Endothelial cell of umbilical vein (primary cell): ENCODE measurements at regions of chr3 and their contacts with region 1.

Region 1: DNA sequence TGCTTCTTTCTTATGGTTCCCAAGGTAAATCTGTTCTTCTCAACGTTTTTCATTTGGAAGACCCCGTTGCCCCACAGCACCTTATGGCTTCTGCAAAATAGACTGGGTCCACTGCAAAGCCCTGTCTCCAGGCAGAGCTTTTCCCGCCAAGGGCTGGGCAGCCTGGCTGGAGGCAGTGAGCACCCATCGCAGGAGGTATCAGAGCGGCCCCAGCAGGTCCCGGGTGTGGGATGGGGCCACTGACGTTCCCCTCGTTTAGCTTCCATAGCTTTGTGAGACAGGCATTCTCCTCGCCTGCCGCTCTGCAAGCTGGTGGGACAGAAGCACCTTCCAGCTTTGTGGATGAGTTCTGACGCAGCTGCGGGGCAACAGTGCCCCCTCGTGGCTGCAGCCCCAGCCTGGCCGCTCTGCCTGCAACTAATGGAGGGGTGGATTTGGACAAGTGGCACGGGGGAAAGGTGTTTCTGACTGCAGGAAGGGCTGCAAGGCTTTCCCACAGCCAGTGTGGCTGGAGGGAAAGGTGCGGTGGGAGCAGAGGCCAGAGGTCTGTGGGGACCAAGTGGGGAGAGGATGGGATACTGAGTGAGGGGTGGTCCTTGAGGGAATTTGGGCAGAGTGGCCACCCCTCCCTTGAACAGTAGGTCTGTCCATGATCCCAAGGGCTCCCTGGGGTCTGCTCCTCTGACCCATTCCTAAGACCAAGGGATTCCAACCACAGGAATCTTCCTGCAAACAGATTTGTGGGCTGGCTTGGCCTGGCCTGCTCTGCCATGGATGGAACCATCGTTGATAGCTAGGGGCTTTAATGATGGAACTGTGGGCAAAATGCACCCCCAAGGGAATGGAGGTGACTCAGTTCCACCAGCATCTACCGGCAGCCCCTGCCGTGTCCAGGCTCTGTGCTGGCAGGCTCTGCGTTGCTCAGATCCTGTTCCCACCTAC is 99.4 kb downstream of the FBLN2 start:
- DNase-seq: peak; percentile 71
- H3K4me3 ChIP-seq: no peak overlapping the region
- H3K27ac ChIP-seq: no peak overlapping the region
- H3K4me1 ChIP-seq: no peaks in the 10 kb centered on the region
- H3K27me3 ChIP-seq: peaks cover 3 to 4% of the 10 kb centered on the region in 2 experiments
- CTCF ChIP-seq: peak; percentile 95 to 99
- POLR2A ChIP-seq: no peak

Region 2: GRCh38 chr3:13091898-13092611 is 556.3 kb before region 1 on chr3:
- CTCF ChIA-PET with region 1: interaction called, 78 read pairs
- POLR2A ChIA-PET with region 1: no interaction called
- dilution Hi-C with region 1: no loop called
- intact Hi-C with region 1: loop called (anchors 1 kb)
- DNase-seq: peak; percentile 72
- H3K4me3 ChIP-seq: no peak overlapping the region
- H3K27ac ChIP-seq: no peak overlapping the region
- H3K4me1 ChIP-seq: no peaks in the 10 kb centered on the region
- H3K27me3 ChIP-seq: peaks cover 3 to 6% of the 10 kb centered on the region in 2 experiments
- CTCF ChIP-seq: peak; percentile 66 to 95
- POLR2A ChIP-seq: no peak

Region 3: DNA sequence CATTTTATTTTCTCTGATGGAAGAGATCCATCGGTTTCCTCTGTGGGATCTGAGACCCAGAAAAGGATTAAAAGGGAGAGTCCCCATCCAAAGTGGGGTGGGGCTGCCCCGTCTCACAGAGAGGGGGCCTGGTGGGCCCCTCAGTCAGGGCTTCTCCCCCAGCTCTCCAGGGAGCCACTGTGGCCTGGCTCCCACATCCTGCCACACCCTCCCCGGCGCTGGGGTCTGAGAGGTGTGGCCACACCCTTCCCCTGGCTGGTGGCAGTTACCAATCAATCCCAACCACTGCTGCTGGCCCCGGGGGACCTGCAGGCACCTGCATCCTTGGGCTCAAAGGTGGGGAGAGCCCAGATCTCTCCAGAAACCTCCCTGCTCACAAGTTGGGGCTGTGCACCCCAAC is 413.3 kb before region 1 on chr3:
- CTCF ChIA-PET with region 1: no interaction called
- POLR2A ChIA-PET with region 1: no interaction called
- dilution Hi-C with region 1: no loop called
- intact Hi-C with region 1: no loop called
- DNase-seq: no peak
- H3K4me3 ChIP-seq: no peak overlapping the region
- H3K27ac ChIP-seq: no peak overlapping the region
- H3K4me1 ChIP-seq: no peaks in the 10 kb centered on the region
- H3K27me3 ChIP-seq: no peaks in the 10 kb centered on the region
- CTCF ChIP-seq: no peak
- POLR2A ChIP-seq: no peak

Region 4: GRCh38 chr3:13461169-13462158 is 186.9 kb before region 1 on chr3:
- CTCF ChIA-PET with region 1: interaction called, 3 read pairs
- POLR2A ChIA-PET with region 1: no interaction called
- dilution Hi-C with region 1: no loop called
- intact Hi-C with region 1: loop called (anchors 1 kb)
- DNase-seq: peak; percentile 61
- H3K4me3 ChIP-seq: no peak overlapping the region
- H3K27ac ChIP-seq: no peak overlapping the region
- H3K4me1 ChIP-seq: no peaks in the 10 kb centered on the region
- H3K27me3 ChIP-seq: no peaks in the 10 kb centered on the region
- CTCF ChIP-seq: peak; percentile 77 to 87
- POLR2A ChIP-seq: no peak

Region 5: DNA sequence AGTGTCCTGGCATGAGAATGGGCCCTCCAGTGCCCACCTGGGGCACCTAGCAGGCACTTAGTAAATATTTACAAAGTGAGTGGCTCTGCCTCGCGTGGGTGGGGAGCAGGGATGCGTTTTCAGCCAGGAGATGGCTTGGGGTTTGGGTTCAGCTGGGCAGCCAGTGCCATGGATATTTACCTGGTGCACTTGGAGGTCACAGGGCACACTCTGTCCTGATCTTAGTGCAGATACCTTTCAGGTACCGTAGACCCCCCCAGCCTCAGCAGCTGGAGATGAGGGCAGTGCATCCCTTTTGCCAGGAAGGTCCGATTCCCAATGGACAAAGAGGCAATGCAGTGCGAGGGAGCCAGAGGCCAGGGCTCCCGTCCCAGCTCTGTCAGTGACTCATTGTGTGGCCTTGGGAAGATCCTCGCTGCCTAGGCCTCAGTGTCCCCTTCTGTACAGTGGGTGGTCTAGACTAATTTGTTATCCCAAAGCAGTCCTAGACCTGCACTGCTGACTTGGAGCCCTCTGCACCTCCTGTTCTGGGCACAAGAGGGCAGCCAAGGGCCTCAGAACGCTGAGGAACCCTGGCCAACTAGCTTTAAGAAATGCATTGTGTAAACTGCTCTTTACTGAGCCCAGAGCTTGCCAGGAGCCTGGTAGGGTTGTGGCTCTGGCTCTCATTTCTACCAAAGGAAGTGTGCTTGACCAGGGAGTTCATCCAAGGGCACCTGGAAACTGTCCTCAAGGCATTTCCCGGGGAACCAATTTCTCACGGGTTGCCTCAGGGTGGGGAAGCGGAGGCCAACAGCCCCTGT is 152.2 kb before region 1 on chr3:
- CTCF ChIA-PET with region 1: interaction called, 746 read pairs
- POLR2A ChIA-PET with region 1: interaction called, 4 read pairs
- dilution Hi-C with region 1: no loop called
- intact Hi-C with region 1: loop called (anchors 1 kb)
- DNase-seq: peak; percentile 73
- H3K4me3 ChIP-seq: no peak overlapping the region
- H3K27ac ChIP-seq: no peak overlapping the region
- H3K4me1 ChIP-seq: no peaks in the 10 kb centered on the region
- H3K27me3 ChIP-seq: no peaks in the 10 kb centered on the region
- CTCF ChIP-seq: peak; percentile 87 to 89
- POLR2A ChIP-seq: no peak

Region 6: DNA sequence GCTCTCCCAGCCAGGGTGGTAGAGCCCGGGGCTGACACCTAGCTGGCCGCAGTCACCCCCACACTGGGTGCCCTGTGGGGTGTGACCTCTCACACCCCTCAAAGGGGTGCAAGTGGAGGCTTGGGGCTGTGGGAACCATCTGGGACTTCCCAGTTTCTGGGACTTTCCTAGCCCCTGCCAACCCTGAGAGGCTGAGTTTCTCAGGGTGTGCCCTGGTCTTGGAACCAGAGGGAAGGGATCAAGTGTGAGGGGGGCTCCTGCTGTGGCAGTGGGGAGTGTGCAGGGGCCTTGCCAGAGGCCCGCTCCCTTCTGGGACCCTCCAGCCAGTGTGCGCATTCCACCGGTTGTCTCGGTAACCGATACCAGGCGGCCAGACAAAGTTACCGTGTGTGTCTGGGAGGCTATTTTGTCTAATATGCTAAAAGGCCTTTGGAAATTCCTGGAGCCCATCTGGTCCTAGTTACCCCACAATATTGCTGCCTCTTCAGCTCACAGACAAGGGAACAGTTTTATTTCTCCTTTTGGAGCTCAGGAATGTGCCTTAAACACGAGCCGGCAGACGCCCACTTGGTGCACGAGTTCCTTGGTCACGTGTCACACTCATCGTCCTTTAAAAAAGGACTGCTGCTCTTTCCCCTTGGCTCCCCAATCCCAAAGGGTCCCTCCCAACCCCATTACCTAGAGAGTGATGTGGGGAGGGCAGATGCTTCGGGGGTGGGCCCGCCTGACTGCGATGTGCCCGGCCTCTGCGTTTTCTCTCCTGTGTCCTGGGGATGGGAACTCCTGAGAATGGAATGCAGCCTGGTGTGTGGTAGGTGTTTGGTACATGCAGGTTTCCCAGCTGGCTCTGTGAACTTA is 135.1 kb before region 1 on chr3:
- CTCF ChIA-PET with region 1: interaction called, 27 read pairs
- POLR2A ChIA-PET with region 1: no interaction called
- dilution Hi-C with region 1: no loop called
- intact Hi-C with region 1: no loop called
- DNase-seq: no peak
- H3K4me3 ChIP-seq: no peak overlapping the region
- H3K27ac ChIP-seq: no peak overlapping the region
- H3K4me1 ChIP-seq: no peaks in the 10 kb centered on the region
- H3K27me3 ChIP-seq: no peaks in the 10 kb centered on the region
- CTCF ChIP-seq: no peak
- POLR2A ChIP-seq: no peak

Region 7: DNA sequence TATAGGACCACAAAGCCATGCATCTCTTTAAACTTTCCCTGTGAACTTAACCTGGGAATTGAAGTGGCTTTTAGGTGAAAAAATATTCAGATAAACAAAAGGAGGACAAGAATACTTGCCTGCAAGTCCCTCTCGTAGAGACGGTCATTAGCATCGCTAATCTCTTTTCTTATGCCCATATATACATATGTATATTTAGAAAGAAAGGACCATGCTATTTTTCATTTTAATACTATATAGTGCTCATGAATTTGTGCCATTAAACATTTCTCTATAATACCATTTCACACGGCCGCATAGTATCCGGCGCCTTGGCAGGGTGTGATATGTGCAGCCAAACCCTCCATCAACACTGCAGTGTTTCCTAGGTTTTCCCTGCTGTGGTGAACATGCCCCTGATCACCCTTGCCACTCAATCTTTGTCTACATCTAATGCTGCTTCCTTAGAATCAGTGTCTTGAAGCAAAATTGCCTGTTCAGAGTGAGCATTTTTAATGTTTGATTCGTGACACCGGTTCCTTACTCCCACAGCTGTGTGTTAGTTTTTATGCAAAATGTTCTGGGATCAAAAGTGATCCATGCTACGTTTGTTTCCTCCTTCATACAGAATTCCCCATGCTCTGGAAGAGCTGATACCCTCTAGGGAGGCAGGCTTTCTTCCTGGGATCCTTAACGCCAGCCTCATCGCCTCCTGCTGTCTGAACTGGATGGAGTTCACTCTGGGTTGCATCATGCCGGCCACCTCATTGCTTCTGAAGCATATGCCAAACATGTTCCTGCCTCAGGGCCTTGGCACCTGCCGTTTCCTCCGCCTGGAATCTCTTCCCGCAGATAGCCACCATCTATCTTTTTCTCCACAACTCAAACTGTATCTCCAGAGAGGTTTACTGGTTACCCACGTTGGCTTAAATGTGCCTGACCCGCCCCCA is 18.7 kb after region 1 on chr3:
- CTCF ChIA-PET with region 1: no interaction called
- POLR2A ChIA-PET with region 1: no interaction called
- dilution Hi-C with region 1: no loop called
- intact Hi-C with region 1: no loop called
- DNase-seq: no peak
- H3K4me3 ChIP-seq: no peak overlapping the region
- H3K27ac ChIP-seq: no peak overlapping the region
- H3K4me1 ChIP-seq: no peaks in the 10 kb centered on the region
- H3K27me3 ChIP-seq: no peaks in the 10 kb centered on the region
- CTCF ChIP-seq: no peak
- POLR2A ChIP-seq: no peak

Region 8: GRCh38 chr3:14461748-14462324 is 813.5 kb after region 1 on chr3:
- CTCF ChIA-PET with region 1: no interaction called
- POLR2A ChIA-PET with region 1: no interaction called
- dilution Hi-C with region 1: no loop called
- intact Hi-C with region 1: loop called (anchors 10 kb)
- DNase-seq: peak; percentile 73
- H3K4me3 ChIP-seq: no peak overlapping the region
- H3K27ac ChIP-seq: no peak overlapping the region
- H3K4me1 ChIP-seq: peaks cover 38% of the 10 kb centered on the region
- H3K27me3 ChIP-seq: no peaks in the 10 kb centered on the region
- CTCF ChIP-seq: peak; percentile 77 to 93
- POLR2A ChIP-seq: no peak